Left cardiac atrium (tissue), 4 donors: ENCODE measurements at regions of chr14 and their contacts with region 1.

Region 1: DNA sequence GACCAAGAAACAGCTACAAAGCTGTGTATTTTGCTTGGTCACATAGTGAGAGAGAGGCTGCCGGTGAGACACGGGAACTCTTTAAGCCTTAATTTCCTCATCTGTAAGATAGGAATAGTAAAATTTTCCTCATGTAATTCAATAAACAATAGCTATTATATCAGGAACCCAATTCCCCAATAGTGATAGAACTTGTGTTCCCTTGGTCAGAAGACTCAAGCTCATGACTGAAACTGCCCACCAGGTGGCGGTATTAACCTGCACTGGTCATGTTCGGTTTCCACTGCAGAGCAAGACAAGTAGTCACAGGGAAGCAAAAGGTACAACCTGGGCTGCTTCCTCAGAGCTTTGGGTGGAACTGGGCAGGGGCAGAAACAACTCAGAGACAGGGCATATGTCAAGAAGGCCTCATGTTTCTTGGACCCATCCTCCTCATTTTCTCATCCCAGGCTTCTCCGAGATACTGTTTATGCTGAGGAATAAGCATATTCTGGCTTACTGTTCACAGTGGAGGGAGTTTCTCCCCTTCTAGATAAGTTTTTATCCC is 4.2 kb upstream of the AJUBA start:
- DNase-seq: peak; percentile 88
- ATAC-seq: peak; percentile 19 to 20

Region 2: GRCh38 chr14:22929848-22930364 is 56.7 kb before region 1 on chr14:
- intact Hi-C with region 1: loop called in 1 of 2 experiments (anchors 10 kb)
- DNase-seq: no peak
- ATAC-seq: peak in 1 of 2 donors; percentile 1

Region 3: DNA sequence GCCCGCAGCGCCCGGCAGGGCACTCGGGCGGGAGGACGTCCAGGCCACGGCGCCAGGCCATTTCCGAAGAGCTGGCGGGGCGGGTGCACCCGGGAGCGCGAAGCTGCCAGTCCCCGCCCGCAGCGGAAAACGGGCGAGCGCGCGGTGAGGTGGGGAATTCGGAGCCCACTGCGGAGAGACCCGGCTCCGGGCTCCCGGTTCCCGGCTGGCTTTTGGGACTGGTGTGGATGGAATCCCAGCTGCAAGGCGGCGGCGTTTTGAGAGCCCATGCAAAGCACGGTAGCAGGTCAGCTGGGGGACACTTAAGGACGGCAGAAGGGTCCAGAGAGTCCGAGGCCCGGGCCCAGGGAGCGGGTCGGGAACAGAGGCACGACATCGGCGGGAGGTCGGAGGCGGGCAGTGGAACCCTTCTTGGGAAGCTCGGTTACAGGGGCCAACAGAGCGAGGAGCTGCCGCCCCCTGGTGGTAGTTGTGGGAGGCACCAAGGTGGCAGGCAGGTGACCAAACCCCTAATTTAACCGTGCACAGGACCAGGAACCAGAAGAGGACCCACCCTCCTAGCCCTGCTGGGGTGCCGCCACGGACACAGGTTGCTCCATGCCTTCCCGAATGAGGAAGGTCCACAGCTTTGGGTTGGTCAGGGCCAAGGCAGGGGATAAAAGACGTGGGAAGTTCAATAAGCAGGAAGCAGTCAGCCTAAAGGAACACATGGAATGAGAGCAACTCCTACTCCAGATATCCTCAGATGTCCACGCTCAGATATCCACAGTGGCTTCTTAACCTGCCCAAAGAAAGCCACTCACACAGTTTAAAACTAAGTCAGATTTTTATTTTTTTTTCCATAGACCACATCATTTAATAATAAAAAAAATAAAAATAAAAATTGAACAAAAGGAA is 71.4 kb after region 1 on chr14:
- intact Hi-C with region 1: loop called (anchors 2 kb)
- DNase-seq: peak; percentile 87
- ATAC-seq: peak; percentile 68 to 85